Pancreas (tissue), 10 donors: ENCODE measurements at regions of chr2 and their contacts with region 1.

Region 1: DNA sequence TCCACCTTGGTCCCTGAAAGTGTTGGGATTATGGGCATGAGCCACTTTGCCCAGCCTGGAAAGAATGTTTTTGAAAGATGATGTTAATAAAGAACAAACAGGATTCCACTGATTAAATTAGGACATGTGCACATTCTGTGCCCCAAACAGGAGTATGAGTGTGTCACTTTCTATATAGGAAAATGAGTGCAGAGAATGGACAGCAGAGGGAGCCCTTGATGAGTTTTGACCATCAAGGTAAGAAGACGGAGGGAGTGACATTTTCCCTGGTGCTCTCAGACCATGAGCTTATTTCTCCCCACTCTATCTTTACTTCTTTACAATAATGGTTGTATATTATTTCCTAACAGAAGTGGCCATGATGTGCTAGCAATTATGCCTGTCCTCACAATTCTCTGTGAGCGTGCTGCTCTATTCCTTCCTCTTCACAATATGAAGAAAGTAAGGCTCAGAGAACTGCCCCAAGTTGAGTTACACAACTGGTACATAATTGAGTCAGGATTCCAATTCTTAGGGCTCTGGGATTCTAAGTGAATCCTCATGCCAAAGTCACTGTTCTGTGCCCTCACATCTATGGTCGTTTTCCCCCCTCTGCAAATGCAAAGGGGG is 20.6 kb downstream of the RPL37A start:
- DNase-seq: peak in 4 of 6 donors; percentile 37 to 77 (median 72)
- ATAC-seq: peak; percentile 83 to 95 (median 91)
- H3K4me3 ChIP-seq: no peak overlapping the region
- H3K27ac ChIP-seq: no peak overlapping the region
- H3K4me1 ChIP-seq: no peaks in the 10 kb centered on the region
- H3K27me3 ChIP-seq: no peaks in the 10 kb centered on the region
- CTCF ChIP-seq: peak; percentile 37 to 71 (median 62)

Region 2: DNA sequence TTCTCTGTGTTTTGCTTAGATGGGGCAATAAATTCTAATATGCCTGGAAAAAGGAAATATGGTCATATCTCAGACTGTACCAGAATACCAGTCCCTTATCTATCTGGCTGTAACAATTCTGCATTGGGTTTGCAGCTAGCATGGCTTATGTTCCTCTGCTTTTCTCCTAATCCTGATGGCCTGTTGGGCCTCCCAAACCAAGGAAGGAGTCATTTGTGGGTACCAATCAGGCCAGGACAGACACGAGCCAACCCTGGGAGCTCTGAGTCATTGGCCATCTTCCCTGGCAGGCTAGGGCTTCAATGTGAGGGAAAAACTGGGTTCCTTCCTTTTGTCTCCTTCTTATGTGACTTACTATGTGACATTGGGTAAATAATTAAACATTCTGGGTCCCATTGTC is 95.0 kb before region 1 on chr2:
- intact Hi-C with region 1: no loop called
- DNase-seq: no peak
- ATAC-seq: no peak
- H3K4me3 ChIP-seq: no peak overlapping the region
- H3K27ac ChIP-seq: no peak overlapping the region
- H3K4me1 ChIP-seq: no peaks in the 10 kb centered on the region
- H3K27me3 ChIP-seq: no peaks in the 10 kb centered on the region
- CTCF ChIP-seq: no peak

Region 3: DNA sequence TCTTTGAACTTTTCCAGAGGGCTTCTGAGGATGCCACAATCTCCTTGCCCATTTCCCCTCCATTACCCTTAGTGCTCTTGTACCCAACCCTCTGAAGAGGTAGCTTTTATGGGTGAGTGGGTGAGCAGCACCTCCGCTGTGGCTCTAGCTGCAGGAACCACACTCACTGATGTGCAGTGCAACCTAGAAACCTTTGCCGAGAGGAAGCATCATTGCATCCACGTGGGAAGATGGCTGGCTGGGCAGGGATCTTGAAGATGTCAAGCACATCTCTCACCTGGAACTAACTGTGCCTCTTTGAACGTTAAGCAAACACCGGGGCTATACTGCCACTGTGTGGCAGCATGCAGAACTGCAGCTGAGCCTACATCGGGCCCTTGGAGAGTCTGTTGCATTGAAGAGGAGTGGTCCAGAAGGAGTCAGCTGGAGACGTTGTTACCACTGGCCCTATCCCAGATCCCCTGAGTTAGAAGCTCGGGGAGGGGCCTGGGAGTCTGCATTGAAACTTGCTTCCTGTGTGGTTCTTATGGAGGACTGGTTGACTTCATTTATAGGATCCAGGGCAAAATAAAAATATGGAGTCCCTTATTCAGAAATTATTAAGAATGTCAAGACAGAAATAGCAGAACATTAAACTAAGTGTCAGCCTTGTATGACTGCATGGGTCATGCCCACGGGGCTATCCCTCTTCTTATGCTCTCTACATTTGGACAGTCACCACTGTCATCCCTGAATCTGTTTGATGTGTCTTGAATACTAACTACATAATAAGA is 147.4 kb after region 1 on chr2:
- intact Hi-C with region 1: loop called (anchors 5 kb)
- DNase-seq: peak; percentile 53 to 87 (median 78)
- ATAC-seq: peak; percentile 54 to 85 (median 75)
- H3K4me3 ChIP-seq: no peak overlapping the region
- H3K27ac ChIP-seq: no peak overlapping the region
- H3K4me1 ChIP-seq: peaks cover 17 to 29% (median 27%) of the 10 kb centered on the region in 3 donors
- H3K27me3 ChIP-seq: no peaks in the 10 kb centered on the region
- CTCF ChIP-seq: peak; percentile 90 to 97 (median 94)